ENCODE measurements at regions of chr16 and their contacts with region 1.

Region 1: DNA sequence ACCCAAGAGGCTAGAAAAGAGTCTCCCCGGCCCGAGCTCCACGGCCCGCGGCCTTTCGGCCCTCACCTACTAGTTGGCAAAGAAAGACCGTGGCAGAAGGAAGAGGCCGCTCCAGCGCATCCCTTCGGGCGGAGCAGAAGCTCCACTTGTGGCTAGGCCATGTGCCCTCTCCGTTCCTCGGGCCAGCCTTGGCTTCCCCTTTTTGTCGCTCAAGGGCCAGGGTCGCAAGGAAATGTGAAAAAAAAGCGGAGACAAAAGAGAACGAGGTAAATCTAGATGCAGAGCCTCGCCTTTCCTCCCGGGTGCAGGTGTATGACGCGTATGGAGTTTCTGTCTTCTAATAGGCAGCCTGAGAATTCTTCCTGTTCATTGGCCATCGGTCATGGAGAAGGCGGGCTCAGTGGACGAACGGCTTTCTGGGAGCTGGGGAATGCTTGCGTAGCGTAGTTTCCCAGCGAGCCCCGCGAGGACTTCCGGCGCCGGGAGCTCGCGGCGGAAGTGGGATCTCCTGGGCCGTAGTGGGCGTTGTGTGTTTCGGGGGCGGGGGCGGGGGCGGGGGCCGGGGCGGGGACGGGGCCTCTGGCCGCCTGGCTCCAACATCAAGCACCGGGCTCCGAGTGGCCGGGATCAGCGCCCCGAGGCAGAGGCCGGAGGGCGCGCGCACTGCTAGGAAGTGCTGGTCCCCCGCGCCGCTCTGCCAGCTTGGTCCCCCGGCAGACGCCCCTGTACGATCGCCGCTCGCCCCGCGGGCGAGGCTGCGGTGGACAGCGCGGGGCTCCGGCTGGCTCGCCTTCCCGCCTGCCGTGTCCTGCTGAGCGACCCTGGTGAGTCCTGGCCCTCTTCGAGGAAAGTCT is at the start of gene ZNF213:
- DNase-seq: peak; percentile 70 to 97 (median 95)
- ATAC-seq: peak; percentile 98
- H3K4me3 ChIP-seq: peak within 1 kb of the TSS; percentile 94
- H3K4me3 Mint-ChIP-seq: peak within 1 kb of the TSS; percentile 93 to 99 (median 96)
- H3K27ac ChIP-seq: peak within 1 kb of the TSS; percentile 93
- H3K27ac Mint-ChIP-seq: peak within 1 kb of the TSS; percentile 94 to 98 (median 97)
- H3K4me1 ChIP-seq: peaks cover 10 to 11% of the 10 kb centered on the region in 2 donors
- H3K4me1 Mint-ChIP-seq: peaks cover 12 to 45% (median 34%) of the 10 kb centered on the region in 7 donors
- H3K27me3 ChIP-seq: no peaks in the 10 kb centered on the region
- H3K27me3 Mint-ChIP-seq: no peaks in the 10 kb centered on the region
- total RNA-seq, gene ZNF213: 3.8 to 14.0 (median 11.8) TPM

Region 2: GRCh38 chr16:2777231-2777902 is 357.4 kb before region 1 on chr16 and contains the start of gene ELOB:
- CTCF ChIA-PET with region 1: no interaction called
- POLR2A ChIA-PET with region 1: no interaction called
- intact Hi-C with region 1: loop called in 1 of 2 experiments (anchors 10 kb)
- DNase-seq: peak; percentile 81 to 95 (median 90)
- ATAC-seq: peak; percentile 95
- H3K4me3 ChIP-seq: peak within 1 kb of the TSS; percentile 93
- H3K4me3 Mint-ChIP-seq: peak within 1 kb of the TSS; percentile 93 to 97 (median 96)
- H3K27ac ChIP-seq: peak within 1 kb of the TSS; percentile 99
- H3K27ac Mint-ChIP-seq: peak within 1 kb of the TSS; percentile 96 to 99 (median 98)
- H3K4me1 ChIP-seq: peaks cover 19 to 24% of the 10 kb centered on the region in 2 donors
- H3K4me1 Mint-ChIP-seq: peaks cover 20 to 55% (median 38%) of the 10 kb centered on the region in 7 donors
- H3K27me3 ChIP-seq: no peaks in the 10 kb centered on the region
- H3K27me3 Mint-ChIP-seq: no peaks in the 10 kb centered on the region
- total RNA-seq, gene ELOB: 65.3 to 242 (median 99.3) TPM

Region 3: DNA sequence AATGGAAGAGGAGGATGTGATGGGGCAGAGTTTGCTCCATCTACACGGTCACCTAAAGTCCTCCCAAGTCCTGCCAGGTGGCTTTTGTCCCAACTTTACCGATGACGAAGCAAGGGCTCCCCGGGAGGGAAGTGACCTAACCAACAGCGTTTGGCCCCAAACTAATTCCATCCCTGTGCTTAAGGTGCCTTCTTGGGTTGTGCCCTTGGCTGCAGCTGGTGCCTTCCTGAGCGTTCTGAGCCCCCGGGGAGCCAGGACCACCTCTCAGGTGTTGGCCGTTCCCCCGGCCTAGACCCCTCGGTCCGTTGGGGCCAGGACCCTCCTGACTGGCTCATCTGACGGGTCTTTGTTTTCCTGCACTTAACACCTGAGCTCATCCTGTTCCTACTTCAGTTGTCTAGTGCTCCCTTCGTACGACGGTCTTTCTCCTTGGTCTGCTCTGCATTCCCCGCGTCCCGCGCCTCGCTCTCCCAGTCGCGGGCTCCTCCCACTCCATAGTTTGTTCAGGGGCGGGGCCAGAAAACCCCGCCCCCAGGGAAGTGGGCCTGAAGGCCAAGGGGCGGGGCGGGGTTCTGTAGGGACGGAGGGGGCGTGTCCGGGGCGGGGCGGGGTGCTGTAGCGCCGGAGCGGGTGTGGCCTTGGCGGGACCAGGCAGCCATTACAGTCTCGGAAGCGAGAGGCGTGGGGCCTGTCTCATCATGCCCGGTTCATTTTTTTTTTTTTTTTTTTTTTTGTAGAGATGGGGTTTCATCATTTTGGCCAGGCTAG is 34.9 kb before region 1 on chr16:
- CTCF ChIA-PET with region 1: interaction called, 233 read pairs
- POLR2A ChIA-PET with region 1: interaction called, 40 read pairs
- intact Hi-C with region 1: loop called (anchors 1 kb)
- DNase-seq: peak; percentile 67 to 94 (median 75)
- ATAC-seq: peak; percentile 94
- H3K4me3 ChIP-seq: peak overlapping the region; percentile 46
- H3K4me3 Mint-ChIP-seq: peak overlapping the region; percentile 71 to 98 (median 82)
- H3K27ac ChIP-seq: peak overlapping the region; percentile 35
- H3K27ac Mint-ChIP-seq: peak overlapping the region; percentile 74 to 93 (median 86)
- H3K4me1 ChIP-seq: peaks cover 25 to 31% of the 10 kb centered on the region in 2 donors
- H3K4me1 Mint-ChIP-seq: peaks cover 27 to 65% (median 54%) of the 10 kb centered on the region in 7 donors
- H3K27me3 ChIP-seq: no peaks in the 10 kb centered on the region
- H3K27me3 Mint-ChIP-seq: no peaks in the 10 kb centered on the region

Region 4: DNA sequence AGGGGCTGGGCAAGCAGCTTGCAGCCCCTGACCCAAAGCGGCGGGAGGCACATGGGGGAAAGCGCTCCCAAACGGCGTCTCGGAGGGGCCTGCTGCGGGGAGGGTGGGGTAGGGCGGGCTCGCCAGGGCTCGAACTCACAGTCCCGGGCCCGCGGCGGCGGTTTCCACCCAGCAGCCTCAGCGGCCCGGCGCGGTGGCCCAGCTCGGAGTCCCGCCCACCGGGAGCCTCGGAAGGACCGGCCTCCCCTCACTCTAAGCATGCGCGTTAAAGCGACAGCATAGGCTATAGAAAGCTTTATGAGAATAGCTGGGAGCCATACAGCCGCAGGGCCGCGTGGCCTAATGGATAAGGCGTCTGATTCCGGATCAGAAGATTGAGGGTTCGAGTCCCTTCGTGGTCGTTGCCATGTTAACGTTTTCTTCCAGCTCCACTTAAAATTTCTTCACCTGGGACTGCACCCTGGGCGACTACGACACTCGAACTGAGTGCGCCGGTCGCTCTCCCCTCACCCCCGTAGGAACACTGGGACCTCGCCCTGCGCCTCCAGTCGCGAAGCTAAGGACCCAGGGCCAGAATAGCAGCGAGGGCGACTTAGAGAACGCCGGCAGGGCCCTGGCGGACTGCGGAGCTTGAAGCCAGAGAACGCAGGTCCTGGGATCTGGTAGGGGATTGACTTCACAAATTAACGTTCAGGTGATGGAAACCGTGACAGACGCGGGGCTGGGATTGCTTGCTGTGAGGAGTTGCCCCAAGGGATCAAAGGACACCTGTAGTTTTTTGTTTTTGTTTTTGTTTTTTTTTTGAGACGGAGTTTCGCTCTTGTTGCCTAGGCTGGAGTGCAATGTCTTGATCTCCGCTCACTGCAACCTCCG is 15.8 kb after region 1 on chr16:
- CTCF ChIA-PET with region 1: interaction called, 9 read pairs
- POLR2A ChIA-PET with region 1: interaction called, 95 read pairs
- intact Hi-C with region 1: loop called (anchors 1 kb)
- DNase-seq: peak; percentile 90 to 100 (median 97)
- ATAC-seq: peak; percentile 90
- H3K4me3 ChIP-seq: peak overlapping the region; percentile 73
- H3K4me3 Mint-ChIP-seq: peak overlapping the region; percentile 83 to 93 (median 90)
- H3K27ac ChIP-seq: peak overlapping the region; percentile 71
- H3K27ac Mint-ChIP-seq: peak overlapping the region; percentile 85 to 98 (median 94)
- H3K4me1 ChIP-seq: peaks cover 0 to 5% of the 10 kb centered on the region in 2 donors
- H3K4me1 Mint-ChIP-seq: peaks cover 11 to 42% (median 22%) of the 10 kb centered on the region in 7 donors
- H3K27me3 ChIP-seq: no peaks in the 10 kb centered on the region
- H3K27me3 Mint-ChIP-seq: peaks cover 0 to 25% (median 0%) of the 10 kb centered on the region in 5 donors

Region 5: GRCh38 chr16:3173892-3174617 is 39.3 kb after region 1 on chr16:
- CTCF ChIA-PET with region 1: interaction called, 14 read pairs
- POLR2A ChIA-PET with region 1: interaction called, 12 read pairs
- intact Hi-C with region 1: no loop called
- DNase-seq: no peak
- ATAC-seq: peak; percentile 13
- H3K4me3 ChIP-seq: no peak overlapping the region
- H3K4me3 Mint-ChIP-seq: peak overlapping the region in 9 of 10 donors; percentile 22 to 70 (median 54)
- H3K27ac ChIP-seq: no peak overlapping the region
- H3K27ac Mint-ChIP-seq: peak overlapping the region in 5 of 9 donors; percentile 2 to 71 (median 18)
- H3K4me1 ChIP-seq: peaks cover 29 to 39% of the 10 kb centered on the region in 2 donors
- H3K4me1 Mint-ChIP-seq: peaks cover 21 to 42% (median 34%) of the 10 kb centered on the region in 7 donors
- H3K27me3 ChIP-seq: peaks cover 3 to 37% of the 10 kb centered on the region in 2 donors
- H3K27me3 Mint-ChIP-seq: peaks cover 46 to 81% (median 53%) of the 10 kb centered on the region in 5 donors

Region 6: GRCh38 chr16:3198334-3199072 is 63.7 kb after region 1 on chr16:
- CTCF ChIA-PET with region 1: no interaction called
- POLR2A ChIA-PET with region 1: no interaction called
- intact Hi-C with region 1: no loop called
- DNase-seq: no peak
- ATAC-seq: no peak
- H3K4me3 ChIP-seq: no peak overlapping the region
- H3K4me3 Mint-ChIP-seq: peak overlapping the region in 1 of 10 donors; percentile 46
- H3K27ac ChIP-seq: no peak overlapping the region
- H3K27ac Mint-ChIP-seq: no peak overlapping the region
- H3K4me1 ChIP-seq: no peaks in the 10 kb centered on the region
- H3K4me1 Mint-ChIP-seq: peaks cover 0 to 10% (median 9%) of the 10 kb centered on the region in 7 donors
- H3K27me3 ChIP-seq: peaks cover 9 to 17% of the 10 kb centered on the region in 2 donors
- H3K27me3 Mint-ChIP-seq: peaks cover 17 to 35% (median 29%) of the 10 kb centered on the region in 5 donors

Region 7: DNA sequence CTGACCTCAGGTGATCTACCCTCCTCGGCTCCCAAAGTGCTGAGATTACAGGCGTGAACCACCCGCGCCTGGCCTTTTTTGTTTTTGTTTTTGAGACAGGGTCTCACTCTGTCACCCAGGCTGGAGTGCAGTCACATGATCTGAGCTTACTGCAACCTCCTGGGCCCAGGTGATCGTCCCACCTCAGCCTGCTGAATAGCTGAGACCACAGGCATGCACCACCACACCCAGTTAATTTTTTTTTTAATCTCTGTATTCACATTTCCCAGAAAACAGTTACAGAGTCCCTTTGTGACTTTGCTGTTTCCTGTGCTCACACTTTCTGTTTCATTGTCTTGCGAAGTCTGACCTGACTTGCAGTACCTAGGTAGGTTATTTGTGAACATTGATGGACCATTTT is 368.7 kb after region 1 on chr16:
- CTCF ChIA-PET with region 1: interaction called, 6 read pairs
- POLR2A ChIA-PET with region 1: no interaction called
- intact Hi-C with region 1: loop called (anchors 2 kb)
- DNase-seq: peak in 8 of 9 donors; percentile 50 to 81 (median 70)
- ATAC-seq: peak; percentile 49
- H3K4me3 ChIP-seq: peak overlapping the region; percentile 3
- H3K4me3 Mint-ChIP-seq: peak overlapping the region; percentile 76 to 94 (median 84)
- H3K27ac ChIP-seq: peak overlapping the region; percentile 92
- H3K27ac Mint-ChIP-seq: peak overlapping the region; percentile 90 to 98 (median 95)
- H3K4me1 ChIP-seq: peaks cover 40 to 47% of the 10 kb centered on the region in 2 donors
- H3K4me1 Mint-ChIP-seq: peaks cover 37 to 80% (median 67%) of the 10 kb centered on the region in 7 donors
- H3K27me3 ChIP-seq: no peaks in the 10 kb centered on the region
- H3K27me3 Mint-ChIP-seq: no peaks in the 10 kb centered on the region

Region 8: GRCh38 chr16:3690470-3690928 is 555.7 kb after region 1 on chr16:
- CTCF ChIA-PET with region 1: no interaction called
- POLR2A ChIA-PET with region 1: no interaction called
- intact Hi-C with region 1: no loop called
- DNase-seq: peak; percentile 65 to 81 (median 75)
- ATAC-seq: peak; percentile 100
- H3K4me3 ChIP-seq: no peak overlapping the region
- H3K4me3 Mint-ChIP-seq: peak overlapping the region in 5 of 10 donors; percentile 17 to 71 (median 42)
- H3K27ac ChIP-seq: no peak overlapping the region
- H3K27ac Mint-ChIP-seq: peak overlapping the region in 5 of 9 donors; percentile 6 to 61 (median 53)
- H3K4me1 ChIP-seq: peaks cover 3 to 7% of the 10 kb centered on the region in 2 donors
- H3K4me1 Mint-ChIP-seq: peaks cover 7 to 10% (median 9%) of the 10 kb centered on the region in 7 donors
- H3K27me3 ChIP-seq: no peaks in the 10 kb centered on the region
- H3K27me3 Mint-ChIP-seq: no peaks in the 10 kb centered on the region